ENCODE measurements at regions of chr14 and their contacts with region 1.

Region 1: GRCh38 chr14:35341446-35342159 is 49.4 kb downstream of the PSMA6 start:
- DNase-seq: peak; percentile 98
- ATAC-seq: peak; percentile 93

Region 2: DNA sequence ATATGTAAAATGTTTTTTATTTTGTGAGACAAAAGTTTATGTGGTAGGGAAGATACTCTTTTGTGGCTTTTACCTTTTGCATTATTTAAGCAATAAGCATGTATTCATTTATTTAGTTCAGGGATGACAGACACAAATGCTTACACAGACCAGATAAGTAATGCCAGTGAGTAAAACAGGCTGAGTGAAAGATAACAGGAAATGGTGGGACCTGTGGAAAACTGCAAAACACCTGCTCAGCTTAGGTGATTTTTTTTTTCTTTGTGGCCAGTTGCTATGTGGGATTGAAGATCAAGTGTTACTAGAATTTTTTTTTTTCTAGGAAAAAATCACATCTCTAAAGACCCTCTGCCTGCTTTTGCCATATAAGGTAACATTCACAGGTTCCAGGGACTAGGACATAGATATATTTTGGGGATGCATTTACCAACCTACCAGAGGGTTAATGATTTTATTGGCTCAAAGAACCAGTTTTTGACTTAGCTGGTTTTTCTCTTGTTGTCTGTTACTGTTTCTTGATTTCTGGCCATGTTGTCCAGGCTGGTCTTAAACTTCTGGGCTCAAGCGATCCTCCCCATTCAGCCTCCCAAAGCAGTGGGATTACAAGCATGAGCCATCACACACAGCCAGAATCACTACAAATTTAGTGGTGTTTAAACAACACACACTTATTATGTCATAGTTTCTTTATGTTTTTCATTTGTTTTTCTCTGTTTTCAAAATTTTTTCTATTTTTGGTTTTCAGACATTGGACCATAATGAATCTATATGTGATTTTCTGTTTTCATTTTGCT is 39.7 kb before region 1 on chr14:
- intact Hi-C with region 1: loop called (anchors 5 kb)
- DNase-seq: no peak
- ATAC-seq: no peak

Region 3: GRCh38 chr14:35385042-35385839 is 43.6 kb after region 1 on chr14:
- intact Hi-C with region 1: loop called (anchors 5 kb)
- DNase-seq: peak; percentile 91
- ATAC-seq: peak; percentile 95